K562 (cell line): ENCODE measurements at regions of chr1 and their contacts with region 1.

Region 1: DNA sequence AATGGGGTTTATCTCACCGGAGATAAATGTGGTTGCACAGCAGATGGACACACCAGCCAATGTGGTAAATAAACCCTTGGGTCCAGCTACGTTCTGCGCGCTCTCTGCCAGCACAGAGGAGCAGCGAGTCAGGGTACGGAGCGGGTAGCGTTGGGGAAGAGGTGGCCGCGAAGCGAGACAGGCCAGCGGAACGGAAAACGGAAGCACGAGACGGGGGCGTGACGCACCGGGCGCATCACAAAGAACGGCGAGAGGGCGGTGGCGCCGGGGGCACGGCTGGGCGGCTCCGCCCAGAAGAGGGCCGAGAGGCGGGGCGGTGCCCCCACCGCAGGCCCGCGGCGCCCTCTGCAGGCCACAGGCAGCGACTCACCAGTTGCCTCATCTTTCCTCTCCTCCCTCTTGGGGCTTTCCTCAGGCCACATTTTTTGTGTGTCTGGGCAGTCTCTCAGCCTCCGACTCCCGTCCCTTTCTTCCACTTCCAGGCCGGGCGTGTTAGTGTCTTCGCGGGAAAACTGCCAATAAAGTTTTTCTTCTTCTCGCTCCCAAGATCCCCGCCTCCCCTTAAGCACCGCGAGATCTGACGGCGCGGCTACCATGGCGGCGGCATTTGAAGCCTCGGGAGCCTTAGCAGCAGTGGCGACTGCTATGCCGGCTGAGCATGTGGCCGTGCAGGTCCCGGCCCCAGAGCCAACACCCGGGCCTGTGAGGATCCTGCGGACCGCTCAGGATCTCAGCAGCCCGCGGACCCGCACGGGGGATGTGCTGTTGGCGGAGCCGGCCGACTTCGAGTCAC is at the start of gene DDX20:
- DNase-seq: peak; percentile 96 to 99 (median 98)
- ATAC-seq: peak; percentile 94
- H3K4me3 ChIP-seq: peak within 1 kb of the TSS; percentile 87
- H3K27ac ChIP-seq: peak within 1 kb of the TSS; percentile 78
- H3K4me1 ChIP-seq: peaks cover 9 to 15% of the 10 kb centered on the region in 2 experiments
- H3K27me3 ChIP-seq: peaks cover 0 to 2% of the 10 kb centered on the region in 2 experiments; a peak in 2 of 5 replicates
- CTCF ChIP-seq: peak; percentile 92 to 98 (median 97)
- EP300 ChIP-seq: peak; percentile 16; the same call in 1 of the 2 replicates
- POLR2A ChIP-seq: peak; percentile 93
- RAD21 ChIP-seq: peak; percentile 96 to 97
- polyA plus RNA-seq, gene DDX20: 8.3 to 8.5 TPM

Region 2: DNA sequence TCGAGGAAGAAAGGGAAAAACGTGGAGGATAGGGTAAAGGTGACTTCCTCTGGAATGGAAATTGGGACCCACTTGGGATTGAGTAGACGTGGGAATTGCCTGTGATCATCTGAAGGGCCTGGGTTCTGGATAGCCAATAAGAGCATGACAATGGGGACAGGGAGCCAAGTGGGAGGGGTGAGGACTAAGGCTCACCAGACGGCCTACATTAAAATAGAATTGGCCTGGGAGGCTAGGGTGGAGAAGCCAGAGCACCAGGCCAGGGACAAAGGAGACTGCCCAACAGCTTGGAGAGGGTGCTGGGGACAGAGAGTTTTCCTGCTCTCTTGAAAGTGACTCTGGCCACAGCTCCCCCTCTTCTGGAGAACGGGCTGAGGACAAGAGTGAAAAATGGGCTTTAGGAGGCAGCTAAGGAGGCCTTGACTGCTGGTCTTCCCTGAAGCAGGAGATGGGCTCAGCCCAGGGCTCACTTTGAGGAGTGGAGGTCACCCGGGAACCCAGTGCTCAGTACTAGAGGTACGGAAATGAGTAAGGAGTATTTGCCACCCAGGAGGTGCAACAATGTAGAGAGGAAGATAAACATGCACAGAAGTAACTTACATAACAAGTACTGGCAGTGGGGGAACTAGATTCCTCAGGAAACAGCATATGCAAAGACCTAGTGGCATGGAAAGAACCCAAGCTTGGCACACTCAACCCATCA is 35.1 kb before region 1 on chr1:
- CTCF ChIA-PET with region 1: interaction called, 32 read pairs
- POLR2A ChIA-PET with region 1: interaction called, 4 read pairs
- in situ Hi-C with region 1: no loop called
- intact Hi-C with region 1: loop called (anchors 1 kb)
- DNase-seq: no peak
- ATAC-seq: 0 out of 3 replicates have a peak, but pooled peaks have one; percentile 5
- H3K4me3 ChIP-seq: no peak overlapping the region
- H3K27ac ChIP-seq: no peak overlapping the region
- H3K4me1 ChIP-seq: peaks cover 3 to 5% of the 10 kb centered on the region in 2 experiments; a peak in 2 of 5 replicates
- H3K27me3 ChIP-seq: peaks cover 0 to 4% of the 10 kb centered on the region in 2 experiments; a peak in 1 of 5 replicates
- CTCF ChIP-seq: no peak
- EP300 ChIP-seq: no peak
- POLR2A ChIP-seq: no peak
- RAD21 ChIP-seq: no peak

Region 3: DNA sequence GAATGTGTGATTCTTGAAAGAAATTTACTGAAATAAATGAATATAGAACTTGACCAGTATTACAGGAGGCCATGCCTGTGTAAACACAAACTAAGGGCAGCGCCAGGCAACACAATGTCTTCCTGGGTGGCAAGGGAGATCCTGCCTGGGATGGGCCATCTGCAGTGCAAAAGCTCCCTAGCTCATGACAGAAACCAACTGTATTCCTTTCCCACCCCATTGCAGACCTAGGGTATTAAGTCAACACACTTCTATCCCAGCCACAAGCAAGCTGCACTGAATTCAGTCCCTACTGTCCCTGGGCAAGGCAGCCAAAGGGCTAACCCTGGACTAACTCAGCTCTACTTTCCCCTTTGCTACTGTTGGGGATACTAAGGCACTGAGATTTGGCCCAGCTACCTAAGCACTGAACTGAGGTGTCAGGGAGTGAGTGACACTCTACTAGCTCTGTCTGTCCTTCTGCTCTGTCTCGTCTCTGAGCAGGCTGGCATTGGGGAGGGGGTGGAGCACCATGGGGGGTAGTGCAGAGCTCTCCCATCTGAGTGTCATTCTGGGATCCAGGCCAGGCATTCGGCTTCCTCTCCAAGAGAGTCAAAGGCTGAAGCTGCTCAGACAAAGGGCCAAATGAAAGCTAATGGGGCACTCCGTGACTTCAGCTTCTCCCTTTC is 18.8 kb before region 1 on chr1:
- CTCF ChIA-PET with region 1: no interaction called
- POLR2A ChIA-PET with region 1: interaction called, 10 read pairs
- in situ Hi-C with region 1: no loop called
- intact Hi-C with region 1: no loop called
- DNase-seq: no peak
- ATAC-seq: no peak
- H3K4me3 ChIP-seq: no peak overlapping the region
- H3K27ac ChIP-seq: no peak overlapping the region
- H3K4me1 ChIP-seq: peaks cover 11 to 35% of the 10 kb centered on the region in 2 experiments
- H3K27me3 ChIP-seq: peaks cover 34 to 78% of the 10 kb centered on the region in 2 experiments
- CTCF ChIP-seq: no peak
- EP300 ChIP-seq: no peak
- POLR2A ChIP-seq: no peak
- RAD21 ChIP-seq: no peak

Region 4: GRCh38 chr1:111769517-111770146 is 14.1 kb after region 1 on chr1:
- CTCF ChIA-PET with region 1: interaction called, 7 read pairs
- POLR2A ChIA-PET with region 1: interaction called, 43 read pairs
- in situ Hi-C with region 1: no loop called
- intact Hi-C with region 1: no loop called
- DNase-seq: peak; percentile 65 to 80 (median 68)
- ATAC-seq: peak; percentile 76
- H3K4me3 ChIP-seq: no peak overlapping the region
- H3K27ac ChIP-seq: no peak overlapping the region
- H3K4me1 ChIP-seq: no peaks in the 10 kb centered on the region
- H3K27me3 ChIP-seq: peaks cover 2 to 6% of the 10 kb centered on the region in 2 experiments; a peak in 3 of 5 replicates
- CTCF ChIP-seq: peak; percentile 68 to 96 (median 82)
- EP300 ChIP-seq: no peak
- POLR2A ChIP-seq: no peak; the same call in 1 of the 2 replicates
- RAD21 ChIP-seq: peak; percentile 94 to 95